Activated CD4-positive, alpha-beta T cell treated with anti-CD3 and anti-CD28 coated beads for 36 hours (primary cell): ENCODE measurements at regions of chr1 and their contacts with region 1.

Region 1: GRCh38 chr1:156591432-156592157 is at the start of gene NAXE:
- DNase-seq: peak; percentile 82
- ATAC-seq: peak; percentile 94
- H3K4me3 Mint-ChIP-seq: peak within 1 kb of the TSS; percentile 80
- H3K27ac Mint-ChIP-seq: peak within 1 kb of the TSS; percentile 93
- H3K4me1 Mint-ChIP-seq: peaks cover 24% of the 10 kb centered on the region
- H3K27me3 Mint-ChIP-seq: no peaks in the 10 kb centered on the region
- total RNA-seq, gene NAXE: 79.9 to 82.0 TPM

Region 2: DNA sequence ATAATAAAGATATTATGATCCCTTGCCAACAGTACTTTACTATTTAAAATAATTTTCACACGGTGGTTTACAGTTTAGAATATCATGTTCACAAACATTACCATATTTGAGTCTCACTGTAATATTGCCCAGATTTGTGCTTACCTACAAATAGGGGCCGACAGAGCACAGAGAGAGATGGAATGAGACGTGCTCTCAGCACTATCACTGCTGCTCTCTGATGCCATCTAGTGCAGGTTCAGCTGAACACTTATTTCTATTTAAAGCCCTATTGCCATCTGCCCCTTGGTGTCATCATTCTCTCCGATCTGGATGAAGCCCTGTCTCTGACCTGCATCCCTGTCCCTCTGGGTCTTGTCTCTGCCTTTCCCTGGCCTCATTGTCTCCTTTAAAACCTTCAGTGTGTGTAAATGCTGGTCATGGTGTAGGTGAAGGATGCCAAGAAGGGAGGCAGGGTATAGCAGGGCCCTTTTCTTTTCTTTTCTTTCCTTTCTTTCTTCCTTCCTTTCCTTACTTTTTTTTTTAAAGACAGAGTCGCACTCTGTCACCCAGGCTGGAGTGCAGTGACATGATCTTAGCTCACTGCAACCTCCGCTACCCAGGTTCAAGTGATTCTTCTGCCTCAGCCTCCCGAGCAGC is 16.6 kb after region 1 on chr1:
- CTCF ChIA-PET with region 1: interaction called, 13 read pairs
- POLR2A ChIA-PET with region 1: no interaction called
- intact Hi-C with region 1: no loop called
- DNase-seq: peak; percentile 78
- ATAC-seq: peak; percentile 98
- H3K4me3 Mint-ChIP-seq: no peak overlapping the region
- H3K27ac Mint-ChIP-seq: no peak overlapping the region
- H3K4me1 Mint-ChIP-seq: peaks cover 8% of the 10 kb centered on the region
- H3K27me3 Mint-ChIP-seq: peaks cover 9% of the 10 kb centered on the region

Region 3: GRCh38 chr1:156638189-156638985 is 46.8 kb after region 1 on chr1:
- CTCF ChIA-PET with region 1: no interaction called
- POLR2A ChIA-PET with region 1: no interaction called
- intact Hi-C with region 1: no loop called
- DNase-seq: no peak
- ATAC-seq: no peak
- H3K4me3 Mint-ChIP-seq: no peak overlapping the region
- H3K27ac Mint-ChIP-seq: no peak overlapping the region
- H3K4me1 Mint-ChIP-seq: peaks cover 17% of the 10 kb centered on the region
- H3K27me3 Mint-ChIP-seq: peaks cover 61% of the 10 kb centered on the region

Region 4: DNA sequence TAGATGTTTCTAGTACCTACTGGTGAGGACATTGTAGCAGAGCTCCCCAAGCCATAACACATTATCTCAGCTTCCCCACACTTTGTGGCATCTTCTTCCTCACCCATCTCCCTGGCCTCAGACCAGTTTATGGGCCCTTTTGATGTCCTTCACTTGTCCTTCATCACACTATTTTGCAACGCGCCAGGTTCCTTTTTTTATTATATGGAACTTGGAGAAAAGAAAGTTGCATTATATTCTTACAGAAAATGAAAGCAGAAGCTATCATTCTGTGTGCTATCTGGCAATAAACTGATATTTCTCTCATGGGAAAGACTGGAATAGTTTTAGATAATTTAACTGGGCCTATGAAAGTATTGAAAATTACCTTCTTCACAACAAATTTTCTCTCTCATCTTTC is 743.5 kb after region 1 on chr1:
- CTCF ChIA-PET with region 1: no interaction called
- POLR2A ChIA-PET with region 1: no interaction called
- intact Hi-C with region 1: no loop called
- DNase-seq: no peak
- ATAC-seq: no peak
- H3K4me3 Mint-ChIP-seq: no peak overlapping the region
- H3K27ac Mint-ChIP-seq: no peak overlapping the region
- H3K4me1 Mint-ChIP-seq: no peaks in the 10 kb centered on the region
- H3K27me3 Mint-ChIP-seq: peaks cover 20% of the 10 kb centered on the region